ENCODE measurements at regions of chr1 and their contacts with region 1.

Region 1: GRCh38 chr1:206725109-206725963 is 40.6 kb downstream of the MAPKAPK2 start:
- DNase-seq: peak; percentile 89
- H3K4me3 Mint-ChIP-seq: no peak overlapping the region
- H3K27ac Mint-ChIP-seq: peak overlapping the region; percentile 17
- H3K4me1 Mint-ChIP-seq: peaks cover 39% of the 10 kb centered on the region
- H3K27me3 Mint-ChIP-seq: no peaks in the 10 kb centered on the region

Region 2: DNA sequence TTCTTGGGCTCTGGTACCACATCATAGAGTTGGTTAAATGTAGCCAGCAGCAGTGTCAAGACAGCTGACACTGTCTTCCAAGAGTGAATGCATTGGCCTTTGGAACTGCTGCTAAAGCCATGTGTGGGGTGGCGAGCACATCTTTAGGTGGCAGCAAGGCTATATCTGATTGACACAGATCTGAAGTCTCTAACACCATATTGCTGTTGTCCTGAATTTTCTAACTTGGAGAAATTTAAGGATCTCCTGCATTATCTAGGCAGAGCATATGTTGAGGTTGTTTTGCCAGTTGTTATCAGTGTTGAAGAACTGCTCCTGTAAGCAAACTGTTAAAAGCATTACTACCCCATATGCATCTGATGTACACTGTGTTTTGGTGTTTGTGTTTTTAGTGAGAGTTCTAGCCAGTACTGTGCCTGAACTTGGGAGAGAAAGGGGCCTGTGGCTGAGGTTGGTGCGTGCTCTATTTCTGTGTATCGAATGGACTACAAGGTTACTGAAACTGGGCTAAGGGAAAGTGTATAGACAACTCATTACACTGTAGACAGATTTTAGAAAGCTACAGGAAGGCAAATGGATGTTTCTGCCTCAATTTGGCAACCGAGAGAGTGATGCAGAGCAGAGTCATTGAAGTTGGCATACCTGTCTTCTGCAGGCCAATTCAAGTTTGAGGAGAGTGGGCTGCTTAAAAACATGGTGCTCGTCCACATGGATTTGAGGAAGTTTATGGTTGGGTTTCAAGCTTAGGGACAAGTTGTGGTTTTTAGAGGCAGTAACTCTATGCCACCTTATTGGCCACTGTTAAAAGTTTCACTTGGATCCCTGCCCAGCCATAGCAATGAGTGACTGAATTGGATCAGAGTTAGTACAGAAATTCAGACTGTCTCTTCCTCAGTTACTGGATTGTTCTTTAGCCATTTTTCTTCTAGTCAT is 73.1 kb before region 1 on chr1:
- intact Hi-C with region 1: no loop called
- DNase-seq: no peak
- H3K4me3 Mint-ChIP-seq: no peak overlapping the region
- H3K27ac Mint-ChIP-seq: no peak overlapping the region
- H3K4me1 Mint-ChIP-seq: peaks cover 7% of the 10 kb centered on the region
- H3K27me3 Mint-ChIP-seq: peaks cover under 1% of the 10 kb centered on the region

Region 3: GRCh38 chr1:206808615-206809014 is 83.3 kb after region 1 on chr1:
- intact Hi-C with region 1: loop called (anchors 1 kb)
- DNase-seq: peak; percentile 87
- H3K4me3 Mint-ChIP-seq: no peak overlapping the region
- H3K27ac Mint-ChIP-seq: peak overlapping the region; percentile 12
- H3K4me1 Mint-ChIP-seq: peaks cover 47% of the 10 kb centered on the region
- H3K27me3 Mint-ChIP-seq: peaks cover 8% of the 10 kb centered on the region